PC-9 (cell line): ENCODE measurements at regions of chr3 and their contacts with region 1.

Region 1: DNA sequence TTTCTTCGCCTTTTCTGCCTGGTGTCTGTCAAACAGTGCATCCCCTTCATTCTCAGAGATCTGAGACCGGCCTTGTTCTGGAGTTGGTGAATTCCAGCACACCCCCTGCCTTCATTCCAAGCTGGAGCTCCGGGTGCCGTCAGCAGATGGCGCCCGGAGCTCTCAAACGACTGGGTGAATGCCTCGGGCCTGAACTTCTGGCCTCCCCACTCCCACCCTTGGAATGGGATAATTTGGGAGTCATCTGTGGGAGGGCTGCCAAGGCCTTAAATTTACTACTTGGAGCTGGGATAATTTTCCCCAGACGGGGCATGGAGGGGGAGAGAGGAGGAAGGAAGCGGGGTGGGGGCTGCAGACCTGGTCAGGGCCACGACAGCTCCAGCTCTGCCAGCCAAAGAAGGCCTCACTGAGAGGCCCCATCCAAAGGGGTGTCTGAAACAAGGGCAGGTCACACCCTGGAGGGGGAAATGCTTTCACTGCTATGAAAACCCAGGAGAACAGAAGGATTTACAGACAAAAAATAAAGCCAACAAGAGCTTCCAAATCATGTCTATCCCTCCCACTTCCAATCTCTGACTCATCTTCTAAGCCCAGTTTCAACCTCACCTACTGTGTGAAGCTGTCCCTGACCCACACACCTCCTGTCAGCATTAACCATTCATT is 187.9 kb downstream of the OPA1 start:
- DNase-seq: peak; percentile 89 to 96
- H3K4me3 ChIP-seq: no peak overlapping the region
- H3K27ac ChIP-seq: peak overlapping the region; percentile 98
- H3K4me1 ChIP-seq: peaks cover 59% of the 10 kb centered on the region
- H3K27me3 ChIP-seq: no peaks in the 10 kb centered on the region
- CTCF ChIP-seq: peak; percentile 99

Region 2: DNA sequence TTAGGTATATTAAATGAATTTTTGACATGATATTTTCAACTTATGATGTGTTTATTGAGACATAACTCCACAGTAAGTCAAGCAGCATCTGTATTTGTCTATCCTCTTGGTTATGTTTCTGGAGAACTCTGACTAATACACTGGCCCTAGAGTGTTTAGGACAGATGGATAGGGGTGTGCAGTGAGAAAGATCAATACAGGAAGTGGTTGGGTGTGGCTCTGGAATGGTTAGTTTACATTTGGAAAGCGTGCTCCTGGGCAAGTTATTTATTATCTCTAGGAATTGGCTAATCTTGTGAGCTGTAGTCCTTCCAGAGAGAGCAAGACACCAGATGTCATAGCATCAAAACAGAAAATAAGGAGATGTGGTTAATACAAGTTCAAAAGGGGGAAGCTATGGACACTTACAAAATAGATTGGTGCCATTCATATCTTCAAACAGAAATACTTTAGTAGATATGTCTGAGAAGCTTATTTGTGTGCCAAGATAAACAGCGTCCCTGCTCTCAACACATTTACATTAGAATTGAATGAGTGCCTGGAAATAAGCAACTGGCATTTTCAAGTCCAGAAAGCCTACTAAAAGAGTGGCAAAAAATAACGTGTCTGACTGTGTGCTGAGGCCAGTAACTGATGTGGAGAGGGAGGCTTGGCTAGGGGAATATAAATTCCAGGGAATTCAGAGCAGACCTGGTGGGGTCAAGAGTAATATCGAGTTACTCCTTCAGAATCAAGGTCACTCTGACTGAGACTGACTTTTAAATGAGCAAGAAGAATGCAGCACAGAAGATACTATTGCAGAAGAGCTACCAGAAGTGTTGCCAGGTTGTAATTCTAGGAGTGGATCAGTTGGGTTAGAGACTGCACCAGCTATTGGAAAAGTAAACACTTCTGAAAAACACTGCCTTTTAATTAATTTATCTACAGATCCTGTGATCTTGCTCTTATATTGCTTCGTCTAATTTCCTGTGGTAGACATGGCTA is 573.4 kb before region 1 on chr3:
- CTCF ChIA-PET with region 1: no interaction called
- POLR2A ChIA-PET with region 1: no interaction called
- intact Hi-C with region 1: no loop called
- DNase-seq: no peak
- H3K4me3 ChIP-seq: no peak overlapping the region
- H3K27ac ChIP-seq: no peak overlapping the region
- H3K4me1 ChIP-seq: no peaks in the 10 kb centered on the region
- H3K27me3 ChIP-seq: 0 out of 2 replicates have a peak, but pooled peaks cover 4% of the 10 kb centered on the region
- CTCF ChIP-seq: no peak

Region 3: GRCh38 chr3:193711964-193712598 is 68.9 kb before region 1 on chr3:
- CTCF ChIA-PET with region 1: no interaction called
- POLR2A ChIA-PET with region 1: no interaction called
- intact Hi-C with region 1: no loop called
- DNase-seq: no peak
- H3K4me3 ChIP-seq: no peak overlapping the region
- H3K27ac ChIP-seq: no peak overlapping the region
- H3K4me1 ChIP-seq: no peaks in the 10 kb centered on the region
- H3K27me3 ChIP-seq: no peaks in the 10 kb centered on the region
- CTCF ChIP-seq: no peak

Region 4: GRCh38 chr3:193872265-193872753 is 91.4 kb after region 1 on chr3:
- CTCF ChIA-PET with region 1: interaction called, 13 read pairs
- POLR2A ChIA-PET with region 1: interaction called, 17 read pairs
- intact Hi-C with region 1: loop called (anchors 1 kb)
- DNase-seq: peak; percentile 94 to 100
- H3K4me3 ChIP-seq: no peak overlapping the region; the same call in 1 of the 2 replicates
- H3K27ac ChIP-seq: peak overlapping the region; percentile 94
- H3K4me1 ChIP-seq: peaks cover 83% of the 10 kb centered on the region
- H3K27me3 ChIP-seq: no peaks in the 10 kb centered on the region
- CTCF ChIP-seq: no peak

Region 5: DNA sequence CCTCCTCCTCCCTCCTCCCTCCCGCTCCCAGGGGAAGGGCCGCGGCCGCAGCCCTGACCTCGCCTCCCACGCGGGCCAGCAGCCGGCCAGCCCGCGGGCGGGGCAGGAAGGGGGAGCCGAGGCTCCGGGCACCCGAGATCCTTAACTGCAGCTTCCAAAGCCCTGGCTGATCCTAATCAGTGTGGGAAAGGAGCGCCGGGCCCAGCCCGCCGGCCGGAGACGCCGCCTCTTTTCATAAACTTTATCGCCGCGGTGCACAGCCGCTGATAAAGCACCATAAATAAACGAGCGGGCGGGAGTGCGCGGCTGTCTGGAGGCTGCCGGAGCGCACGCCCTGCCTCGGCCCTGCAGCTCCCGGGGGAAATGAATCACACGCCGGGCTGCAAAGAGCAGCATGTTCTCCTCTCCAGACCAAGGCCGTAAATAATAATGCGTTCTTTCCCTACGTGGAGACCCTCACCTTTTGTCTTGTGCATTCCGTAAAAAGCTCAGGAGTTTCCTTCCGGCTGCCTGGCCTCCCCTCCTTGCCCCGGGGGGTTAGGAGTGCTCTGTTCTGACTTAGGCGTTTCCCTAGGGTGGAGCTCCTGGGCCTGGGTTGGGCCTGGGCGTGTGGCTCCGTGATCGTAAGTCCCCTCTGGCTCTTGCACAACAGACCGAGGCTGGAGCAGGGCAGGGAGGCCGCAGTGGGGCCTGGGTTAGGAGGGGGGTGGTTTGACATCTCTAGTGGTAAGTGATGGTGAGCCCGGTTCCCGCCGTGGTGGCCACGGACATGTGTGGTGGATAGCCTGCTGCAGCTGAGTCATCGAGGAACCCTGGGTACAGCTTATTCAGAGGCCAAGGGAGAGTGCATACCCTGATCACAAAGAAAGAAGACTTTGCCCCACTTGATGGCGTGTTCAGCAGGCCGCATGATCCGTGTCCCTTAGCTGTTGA is 222.4 kb after region 1 on chr3:
- CTCF ChIA-PET with region 1: interaction called, 3 read pairs
- POLR2A ChIA-PET with region 1: no interaction called
- intact Hi-C with region 1: loop called (anchors 1 kb)
- DNase-seq: peak; percentile 98
- H3K4me3 ChIP-seq: peak overlapping the region; percentile 35; the same call in 1 of the 2 replicates
- H3K27ac ChIP-seq: peak overlapping the region; percentile 88
- H3K4me1 ChIP-seq: peaks cover 40% of the 10 kb centered on the region
- H3K27me3 ChIP-seq: no peaks in the 10 kb centered on the region
- CTCF ChIP-seq: no peak

Region 6: GRCh38 chr3:194141415-194142155 is 360.6 kb after region 1 on chr3:
- CTCF ChIA-PET with region 1: interaction called, 4 read pairs
- POLR2A ChIA-PET with region 1: interaction called, 27 read pairs
- intact Hi-C with region 1: no loop called
- DNase-seq: peak; percentile 97
- H3K4me3 ChIP-seq: peak overlapping the region; percentile 46; the same call in 1 of the 2 replicates
- H3K27ac ChIP-seq: peak overlapping the region; percentile 99
- H3K4me1 ChIP-seq: peaks cover 65% of the 10 kb centered on the region
- H3K27me3 ChIP-seq: no peaks in the 10 kb centered on the region
- CTCF ChIP-seq: 0 out of 2 replicates have a peak, but pooled peaks have one; percentile 37

Region 7: GRCh38 chr3:194296454-194297263 is 515.7 kb after region 1 on chr3:
- CTCF ChIA-PET with region 1: no interaction called
- POLR2A ChIA-PET with region 1: no interaction called
- intact Hi-C with region 1: loop called (anchors 1 kb)
- DNase-seq: peak; percentile 94 to 98
- H3K4me3 ChIP-seq: peak overlapping the region; percentile 57
- H3K27ac ChIP-seq: peak overlapping the region; percentile 97
- H3K4me1 ChIP-seq: peaks cover 65% of the 10 kb centered on the region
- H3K27me3 ChIP-seq: no peaks in the 10 kb centered on the region
- CTCF ChIP-seq: peak; percentile 30; the same call in 1 of the 2 replicates